HepG2 (cell line): ENCODE measurements at regions of chr1 and their contacts with region 1.

Region 1: GRCh38 chr1:24415334-24415909 is at the start of gene NIPAL3:
- DNase-seq: peak; percentile 97
- ATAC-seq: peak; percentile 94
- H3K4me3 ChIP-seq: peak within 1 kb of the TSS; percentile 75 to 77 (median 75)
- H3K27ac ChIP-seq: peak within 1 kb of the TSS; percentile 47
- H3K4me1 ChIP-seq: peaks cover 43% of the 10 kb centered on the region
- H3K27me3 ChIP-seq: no peaks in the 10 kb centered on the region; a peak in 1 of 5 replicates
- CTCF ChIP-seq: peak; percentile 93
- EP300 ChIP-seq: 0 out of 4 replicates have a peak, but pooled peaks of 1 of the 2 experiments have one; percentile 6
- POLR2A ChIP-seq: no peak
- RAD21 ChIP-seq: peak; percentile 85
- total RNA-seq, gene NIPAL3: 5.6 and 5.8 TPM in 2 replicates

Region 2: DNA sequence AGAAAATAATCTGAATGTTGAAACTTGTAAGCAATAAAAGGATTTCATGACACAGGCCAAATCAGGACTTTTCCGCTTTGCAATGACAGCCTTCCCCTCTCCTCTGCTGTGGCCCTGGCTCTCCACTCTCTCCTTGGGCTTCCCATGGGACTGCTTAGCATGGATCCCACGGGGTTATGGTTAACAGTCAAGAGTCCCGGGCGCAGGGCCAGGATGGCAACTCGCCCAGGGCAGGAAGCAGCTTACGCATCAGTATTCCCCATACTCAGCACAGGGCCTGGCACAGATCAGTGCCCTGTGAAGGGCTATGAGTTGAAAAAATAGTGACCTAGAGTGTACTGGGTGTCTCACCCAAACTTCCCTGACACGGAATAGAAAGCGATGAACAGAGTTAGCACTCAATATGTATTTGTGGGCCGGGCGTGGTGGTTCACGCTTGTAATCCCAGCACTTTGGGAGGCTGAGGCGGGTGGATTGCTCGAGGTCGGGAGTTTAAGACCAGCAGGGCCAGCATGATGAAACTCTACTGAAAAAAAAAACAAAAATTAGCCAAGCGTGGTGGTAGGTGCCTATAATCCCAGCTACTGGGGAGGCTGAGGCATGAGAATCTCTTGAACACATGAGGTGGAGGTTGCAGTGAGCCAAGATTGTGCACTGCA is 125.4 kb before region 1 on chr1:
- CTCF ChIA-PET with region 1: no interaction called
- POLR2A ChIA-PET with region 1: no interaction called
- in situ Hi-C with region 1: no loop called
- intact Hi-C with region 1: no loop called
- DNase-seq: no peak
- ATAC-seq: no peak
- H3K4me3 ChIP-seq: no peak overlapping the region
- H3K27ac ChIP-seq: no peak overlapping the region
- H3K4me1 ChIP-seq: 0 out of 2 replicates have a peak, but pooled peaks cover 6% of the 10 kb centered on the region
- H3K27me3 ChIP-seq: peaks cover 3 to 30% of the 10 kb centered on the region in 2 experiments; a peak in 3 of 5 replicates
- CTCF ChIP-seq: no peak
- EP300 ChIP-seq: no peak
- POLR2A ChIP-seq: no peak
- RAD21 ChIP-seq: no peak

Region 3: GRCh38 chr1:24308365-24309015 is 106.9 kb before region 1 on chr1:
- CTCF ChIA-PET with region 1: no interaction called
- POLR2A ChIA-PET with region 1: no interaction called
- in situ Hi-C with region 1: no loop called
- intact Hi-C with region 1: no loop called
- DNase-seq: no peak
- ATAC-seq: no peak
- H3K4me3 ChIP-seq: no peak overlapping the region
- H3K27ac ChIP-seq: no peak overlapping the region
- H3K4me1 ChIP-seq: no peaks in the 10 kb centered on the region
- H3K27me3 ChIP-seq: peaks cover 1 to 24% of the 10 kb centered on the region in 2 experiments; a peak in 4 of 5 replicates
- CTCF ChIP-seq: no peak
- EP300 ChIP-seq: no peak
- POLR2A ChIP-seq: no peak
- RAD21 ChIP-seq: no peak

Region 4: DNA sequence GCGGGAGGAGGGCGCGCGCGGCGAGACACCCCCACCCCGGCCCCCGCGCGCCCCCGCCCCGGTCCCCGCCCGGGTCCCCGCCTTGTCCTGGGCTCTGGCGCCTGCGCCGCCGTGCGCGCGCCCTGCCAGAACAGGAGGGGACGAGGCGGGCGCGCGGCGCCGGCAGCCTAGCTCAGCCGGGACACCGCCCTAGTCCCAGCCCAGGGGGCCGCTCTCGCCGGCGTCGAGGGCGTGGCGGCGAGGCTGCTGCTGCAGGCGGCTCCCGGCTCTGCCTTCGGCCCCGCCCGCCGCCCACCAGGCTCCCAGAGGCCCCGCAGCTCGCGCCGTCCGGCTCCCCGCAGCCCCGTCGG is 87.3 kb after region 1 on chr1 and contains the start of gene RCAN3:
- CTCF ChIA-PET with region 1: no interaction called
- POLR2A ChIA-PET with region 1: interaction called, 7 read pairs
- in situ Hi-C with region 1: no loop called
- intact Hi-C with region 1: loop called (anchors 10 kb)
- DNase-seq: peak; percentile 69
- ATAC-seq: peak; percentile 88
- H3K4me3 ChIP-seq: peak within 1 kb of the TSS; percentile 71 to 84 (median 79)
- H3K27ac ChIP-seq: peak within 1 kb of the TSS; percentile 93
- H3K4me1 ChIP-seq: peaks cover 47% of the 10 kb centered on the region
- H3K27me3 ChIP-seq: no peaks in the 10 kb centered on the region; a peak in 1 of 5 replicates
- CTCF ChIP-seq: no peak
- EP300 ChIP-seq: no peak
- POLR2A ChIP-seq: peak in 1 of 2 experiments; percentile 50; a peak in 2 of 4 replicates
- RAD21 ChIP-seq: peak; percentile 52
- total RNA-seq, gene RCAN3: 13.3 and 13.6 TPM in 2 replicates

Region 5: GRCh38 chr1:24526940-24527542 is 111.6 kb after region 1 on chr1:
- CTCF ChIA-PET with region 1: no interaction called
- POLR2A ChIA-PET with region 1: no interaction called
- in situ Hi-C with region 1: no loop called
- intact Hi-C with region 1: loop called (anchors 2 kb)
- DNase-seq: no peak
- ATAC-seq: no peak
- H3K4me3 ChIP-seq: no peak overlapping the region
- H3K27ac ChIP-seq: no peak overlapping the region
- H3K4me1 ChIP-seq: peaks cover 38% of the 10 kb centered on the region
- H3K27me3 ChIP-seq: no peaks in the 10 kb centered on the region
- CTCF ChIP-seq: peak; percentile 32
- EP300 ChIP-seq: no peak
- POLR2A ChIP-seq: no peak
- RAD21 ChIP-seq: no peak

Region 6: DNA sequence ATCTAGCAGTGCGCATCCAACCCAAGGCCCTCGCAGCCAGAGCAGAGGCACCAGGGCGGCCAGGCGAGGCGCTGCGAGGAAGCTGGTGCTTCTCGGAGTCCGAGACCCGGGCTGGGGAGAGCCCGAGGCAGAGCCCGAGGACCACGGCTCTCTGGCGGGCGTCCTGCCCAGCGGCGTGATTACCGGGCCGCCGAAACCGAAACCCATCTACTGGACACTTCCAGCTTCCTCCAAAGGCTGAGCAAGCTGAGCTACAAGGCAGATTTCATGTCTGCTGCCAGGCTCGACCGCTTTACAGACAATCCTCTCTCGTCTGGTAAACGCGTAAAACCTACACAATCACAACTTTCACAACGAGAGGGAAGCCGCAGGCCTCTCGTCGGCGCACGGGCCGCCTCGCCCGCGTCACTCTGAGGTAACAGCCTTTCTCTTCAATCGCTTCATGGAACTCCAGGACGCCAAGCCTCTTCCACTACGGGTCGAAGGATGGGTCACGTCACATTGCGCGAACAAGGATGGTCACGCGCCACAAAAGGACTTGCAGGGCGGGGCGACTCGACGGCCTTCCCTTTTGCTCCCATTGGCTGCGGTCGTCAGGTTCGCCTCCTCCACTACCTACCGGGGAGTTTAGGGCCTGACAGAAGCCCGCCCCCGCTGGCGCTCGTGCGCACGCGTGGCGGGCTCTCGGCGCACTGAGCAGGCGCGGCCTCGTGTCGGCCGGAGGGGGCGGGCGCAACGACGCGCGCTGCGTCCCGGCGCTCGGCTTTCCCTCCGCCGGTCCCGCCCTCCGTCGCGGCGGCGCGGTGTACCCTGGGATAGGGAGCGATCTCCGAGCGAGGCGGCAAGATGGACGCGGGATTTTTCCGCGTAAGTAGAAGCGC is 227.3 kb after region 1 on chr1 and contains the start of gene SRRM1:
- CTCF ChIA-PET with region 1: no interaction called
- POLR2A ChIA-PET with region 1: interaction called, 3 read pairs
- in situ Hi-C with region 1: no loop called
- intact Hi-C with region 1: loop called (anchors 5 kb)
- DNase-seq: peak; percentile 99
- ATAC-seq: peak; percentile 91
- H3K4me3 ChIP-seq: peak within 1 kb of the TSS; percentile 94 to 98 (median 98)
- H3K27ac ChIP-seq: peak within 1 kb of the TSS; percentile 100
- H3K4me1 ChIP-seq: peaks cover 61% of the 10 kb centered on the region
- H3K27me3 ChIP-seq: no peaks in the 10 kb centered on the region; a peak in 1 of 5 replicates
- CTCF ChIP-seq: peak; percentile 27
- EP300 ChIP-seq: no peak
- POLR2A ChIP-seq: peak; percentile 95 to 98
- RAD21 ChIP-seq: no peak
- total RNA-seq, gene SRRM1: 31.6 and 33.7 TPM in 2 replicates

Region 7: GRCh38 chr1:25810341-25811299 is 1395.2 kb after region 1 on chr1:
- CTCF ChIA-PET with region 1: no interaction called
- POLR2A ChIA-PET with region 1: no interaction called
- in situ Hi-C with region 1: no loop called
- intact Hi-C with region 1: no loop called
- DNase-seq: peak; percentile 25
- ATAC-seq: peak; percentile 81
- H3K4me3 ChIP-seq: no peak overlapping the region
- H3K27ac ChIP-seq: no peak overlapping the region
- H3K4me1 ChIP-seq: no peaks in the 10 kb centered on the region
- H3K27me3 ChIP-seq: no peaks in the 10 kb centered on the region
- CTCF ChIP-seq: peak; percentile 98
- EP300 ChIP-seq: no peak
- POLR2A ChIP-seq: no peak
- RAD21 ChIP-seq: peak; percentile 95